ENCODE measurements at regions of chr14 and their contacts with region 1.

Region 1: GRCh38 chr14:102849526-102850379 is 72.5 kb downstream of the TRAF3 start:
- DNase-seq: no peak
- ATAC-seq: no peak
- H3K4me3 ChIP-seq: no peak overlapping the region
- H3K4me3 Mint-ChIP-seq: no peak overlapping the region
- H3K27ac ChIP-seq: no peak overlapping the region
- H3K27ac Mint-ChIP-seq: no peak overlapping the region
- H3K4me1 ChIP-seq: no peaks in the 10 kb centered on the region
- H3K4me1 Mint-ChIP-seq: peaks cover 12% of the 10 kb centered on the region
- H3K27me3 ChIP-seq: no peaks in the 10 kb centered on the region
- H3K27me3 Mint-ChIP-seq: no peaks in the 10 kb centered on the region
- CTCF ChIP-seq: no peak

Region 2: DNA sequence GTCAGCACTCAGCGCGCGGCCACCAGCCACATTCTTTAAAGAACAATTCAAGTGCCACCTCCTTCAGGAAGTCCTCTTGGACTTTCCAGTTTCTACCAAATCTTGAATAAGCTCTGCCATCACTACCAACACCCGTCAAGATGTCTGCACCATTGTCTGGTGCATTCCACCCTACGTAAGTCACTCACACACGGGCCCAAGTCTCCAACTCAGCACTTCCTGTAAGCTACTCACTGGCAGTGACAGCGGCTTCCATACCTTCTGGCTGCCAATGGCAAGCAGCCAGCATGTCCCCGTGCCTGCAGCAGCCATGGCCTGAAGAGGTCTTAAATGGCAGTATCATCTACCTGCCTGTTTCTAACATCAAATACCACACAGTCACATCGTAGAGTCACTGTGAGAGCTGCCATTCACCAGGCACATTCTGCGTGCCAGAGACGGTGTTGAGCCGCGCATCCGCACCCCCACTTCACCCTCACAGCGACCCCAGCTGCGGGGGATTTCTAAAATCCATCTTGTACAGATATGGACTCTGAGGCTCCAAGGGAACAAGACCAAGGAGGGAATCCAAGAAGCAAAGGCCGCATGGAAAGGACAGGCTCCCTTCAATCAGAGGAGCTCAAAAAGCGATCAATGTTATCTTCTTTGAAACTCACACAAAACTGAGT is 159.3 kb after region 1 on chr14:
- CTCF ChIA-PET with region 1: no interaction called
- POLR2A ChIA-PET with region 1: no interaction called
- intact Hi-C with region 1: loop called in 1 of 2 experiments (anchors 5 kb)
- DNase-seq: no peak
- ATAC-seq: no peak
- H3K4me3 ChIP-seq: no peak overlapping the region
- H3K4me3 Mint-ChIP-seq: no peak overlapping the region
- H3K27ac ChIP-seq: no peak overlapping the region
- H3K27ac Mint-ChIP-seq: no peak overlapping the region
- H3K4me1 ChIP-seq: no peaks in the 10 kb centered on the region
- H3K4me1 Mint-ChIP-seq: no peaks in the 10 kb centered on the region
- H3K27me3 ChIP-seq: no peaks in the 10 kb centered on the region
- H3K27me3 Mint-ChIP-seq: no peaks in the 10 kb centered on the region
- CTCF ChIP-seq: no peak

Measured in CD8-positive, alpha-beta T cell (primary cell).